ENCODE measurements at regions of chr10 and their contacts with region 1.

Region 1: GRCh38 chr10:73398013-73398412 is 15.8 kb downstream of the ANXA7 start:
- DNase-seq: peak; percentile 67
- ATAC-seq: peak; percentile 97
- H3K4me3 Mint-ChIP-seq: no peak overlapping the region
- H3K27ac Mint-ChIP-seq: no peak overlapping the region
- H3K4me1 Mint-ChIP-seq: no peaks in the 10 kb centered on the region
- H3K27me3 Mint-ChIP-seq: no peaks in the 10 kb centered on the region
- CTCF ChIP-seq: peak; percentile 34; the same call in 1 of the 2 replicates

Region 2: DNA sequence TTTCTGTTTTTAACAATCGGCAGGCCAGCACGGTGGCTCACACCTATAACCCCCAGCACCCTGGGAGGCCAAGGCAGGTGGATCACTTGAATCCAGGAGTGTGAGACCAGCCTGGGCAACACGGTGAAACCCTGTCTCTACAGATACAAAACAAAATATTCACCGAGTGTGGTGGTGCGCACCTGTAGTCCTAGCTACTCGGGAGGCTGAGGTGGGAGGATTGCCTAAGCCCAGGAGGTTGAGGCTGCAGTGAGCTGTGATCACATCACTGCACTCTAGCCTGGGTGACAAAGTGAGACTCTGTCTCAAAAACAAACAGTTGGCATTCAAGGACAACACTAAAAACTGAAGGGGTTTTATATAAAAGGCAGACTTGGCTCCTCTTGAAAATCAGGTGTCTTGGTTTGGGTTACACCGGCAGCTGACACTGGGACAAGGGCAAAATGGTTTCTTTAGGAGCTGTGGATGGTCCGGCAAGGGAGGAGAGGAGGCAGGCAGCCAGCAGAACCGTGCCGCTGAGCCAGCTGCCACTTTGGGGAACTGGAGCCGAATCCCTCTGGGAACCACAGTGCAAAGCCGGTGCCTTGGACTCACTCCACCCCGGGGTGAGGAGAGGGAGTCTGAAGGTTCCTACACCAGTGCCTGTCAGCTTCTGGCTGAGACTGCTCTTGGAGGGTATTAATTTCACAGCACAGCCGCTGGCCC is 1381.3 kb before region 1 on chr10:
- CTCF ChIA-PET with region 1: no interaction called
- POLR2A ChIA-PET with region 1: no interaction called
- DNase-seq: no peak
- ATAC-seq: no peak
- H3K4me3 Mint-ChIP-seq: no peak overlapping the region
- H3K27ac Mint-ChIP-seq: no peak overlapping the region
- H3K4me1 Mint-ChIP-seq: peaks cover 6% of the 10 kb centered on the region
- H3K27me3 Mint-ChIP-seq: no peaks in the 10 kb centered on the region
- CTCF ChIP-seq: no peak

Region 3: DNA sequence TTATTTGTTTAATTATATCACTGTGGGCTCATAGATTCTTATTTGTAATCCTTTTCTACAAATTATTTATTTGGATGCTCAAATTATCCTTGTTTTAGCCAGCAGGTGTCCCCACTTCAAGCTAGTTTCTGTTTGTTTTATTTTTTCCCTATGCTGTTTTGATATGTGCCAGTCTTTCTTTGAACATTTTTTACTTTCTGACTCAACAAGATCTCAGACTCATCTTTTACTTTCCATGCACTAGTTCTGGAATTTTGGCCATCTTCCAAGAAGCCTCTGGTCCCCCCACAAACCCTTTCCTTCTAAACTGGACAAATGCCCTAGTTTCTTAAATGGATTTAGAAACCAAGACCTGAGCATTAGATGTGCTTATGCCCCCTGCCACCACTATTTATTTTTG is 134.1 kb before region 1 on chr10:
- CTCF ChIA-PET with region 1: interaction called, 12 read pairs
- POLR2A ChIA-PET with region 1: no interaction called
- DNase-seq: no peak
- ATAC-seq: no peak
- H3K4me3 Mint-ChIP-seq: no peak overlapping the region
- H3K27ac Mint-ChIP-seq: no peak overlapping the region
- H3K4me1 Mint-ChIP-seq: no peaks in the 10 kb centered on the region
- H3K27me3 Mint-ChIP-seq: peaks cover 4% of the 10 kb centered on the region
- CTCF ChIP-seq: 0 out of 2 replicates have a peak, but pooled peaks have one; percentile 24

Region 4: DNA sequence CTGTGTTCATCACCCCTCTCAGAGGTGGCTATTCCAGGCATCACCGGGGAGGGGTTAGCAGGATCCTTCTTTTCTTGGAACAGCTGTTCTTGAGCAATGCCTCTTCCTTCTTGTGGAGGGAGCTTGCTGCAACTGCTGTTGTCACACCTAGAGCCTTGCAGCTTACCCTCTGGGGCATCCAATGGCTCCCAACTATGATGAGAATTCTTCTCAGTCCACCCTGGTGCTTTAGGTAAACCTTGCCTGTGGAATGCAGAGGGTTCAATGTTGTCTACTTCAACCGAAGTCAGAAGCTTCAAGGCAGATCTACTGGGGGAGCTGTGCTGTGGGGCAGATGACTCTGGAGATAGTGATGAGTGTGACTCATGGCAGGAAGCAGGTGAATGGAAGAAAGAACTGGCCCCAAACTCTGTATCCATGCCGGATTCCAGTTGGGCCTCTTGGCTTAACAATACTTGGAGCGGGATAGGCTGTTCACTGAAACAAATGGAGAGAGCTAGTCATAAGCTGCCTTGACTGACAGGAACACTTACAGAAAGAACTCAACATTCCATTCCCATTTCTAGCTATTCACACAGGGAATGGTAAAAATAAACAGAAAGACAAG is 119.4 kb after region 1 on chr10:
- CTCF ChIA-PET with region 1: no interaction called
- POLR2A ChIA-PET with region 1: no interaction called
- DNase-seq: no peak
- ATAC-seq: no peak
- H3K4me3 Mint-ChIP-seq: no peak overlapping the region
- H3K27ac Mint-ChIP-seq: no peak overlapping the region
- H3K4me1 Mint-ChIP-seq: no peaks in the 10 kb centered on the region
- H3K27me3 Mint-ChIP-seq: no peaks in the 10 kb centered on the region
- CTCF ChIP-seq: no peak

Region 5: DNA sequence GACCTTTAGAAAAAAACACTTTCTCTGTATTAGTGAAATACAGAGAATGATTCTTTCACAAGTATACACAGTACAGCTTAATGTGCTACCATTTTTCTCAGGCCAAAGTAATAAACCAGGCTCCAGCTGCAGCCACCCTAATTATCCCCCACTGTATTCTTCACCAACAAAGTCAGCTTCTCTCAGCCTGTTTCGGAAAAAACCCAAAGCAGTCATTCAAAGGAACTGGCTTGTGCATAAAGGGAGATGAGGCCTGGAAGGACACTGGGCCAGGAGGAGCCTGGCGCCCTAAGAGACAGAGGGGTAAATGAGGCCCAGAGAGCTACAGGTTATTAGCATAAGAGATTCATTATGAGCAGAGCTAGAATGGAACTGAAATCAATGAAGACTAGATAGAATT is 183.9 kb after region 1 on chr10:
- CTCF ChIA-PET with region 1: no interaction called
- POLR2A ChIA-PET with region 1: no interaction called
- DNase-seq: no peak
- ATAC-seq: peak; percentile 28; the same call in 1 of the 2 replicates
- H3K4me3 Mint-ChIP-seq: no peak overlapping the region
- H3K27ac Mint-ChIP-seq: peak overlapping the region; percentile 57
- H3K4me1 Mint-ChIP-seq: peaks cover 6% of the 10 kb centered on the region
- H3K27me3 Mint-ChIP-seq: no peaks in the 10 kb centered on the region
- CTCF ChIP-seq: no peak

Region 6: DNA sequence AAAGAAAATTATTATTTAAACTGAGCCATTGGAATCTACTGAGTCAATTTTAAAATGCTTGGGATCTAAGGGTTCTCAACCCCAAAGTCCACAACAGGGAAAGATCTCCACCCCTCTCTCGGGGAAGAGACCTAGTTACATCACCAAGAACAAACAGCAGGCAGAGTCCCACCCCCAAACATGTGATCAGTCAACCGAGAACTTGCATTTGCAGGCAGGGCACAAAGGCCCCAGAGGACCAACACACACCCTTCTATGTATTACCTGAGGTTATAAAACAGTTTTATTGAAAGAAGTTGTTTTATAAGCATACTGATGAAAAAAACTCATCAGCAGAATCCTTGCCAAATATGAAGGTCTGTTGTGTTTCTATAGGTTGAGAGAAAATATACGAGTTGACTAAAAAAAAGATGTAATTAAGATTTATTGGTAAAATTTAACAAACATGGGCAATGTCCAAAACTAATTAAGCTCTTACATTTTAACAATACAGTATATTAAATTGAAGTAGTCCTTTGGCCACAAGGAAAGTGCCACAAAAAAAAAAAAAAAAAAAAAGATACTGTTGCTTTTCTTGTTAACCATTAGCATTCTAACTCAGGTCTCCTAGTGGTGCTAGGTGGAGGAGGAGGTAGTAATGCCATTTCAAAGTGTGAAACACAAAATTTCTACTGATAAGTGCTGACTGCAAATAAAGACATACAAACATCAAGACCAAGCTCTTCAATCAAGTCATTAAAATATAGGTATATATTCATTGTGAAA is 194.1 kb after region 1 on chr10:
- CTCF ChIA-PET with region 1: no interaction called
- POLR2A ChIA-PET with region 1: no interaction called
- DNase-seq: peak; percentile 68
- ATAC-seq: peak; percentile 86
- H3K4me3 Mint-ChIP-seq: peak overlapping the region; percentile 59
- H3K27ac Mint-ChIP-seq: peak overlapping the region; percentile 99
- H3K4me1 Mint-ChIP-seq: peaks cover 49% of the 10 kb centered on the region
- H3K27me3 Mint-ChIP-seq: no peaks in the 10 kb centered on the region
- CTCF ChIP-seq: no peak

Measured in WTC11 (cell line).